Left ventricle myocardium superior (tissue), 1 donor: ENCODE measurements at regions of chr7 and their contacts with region 1.

Region 1: DNA sequence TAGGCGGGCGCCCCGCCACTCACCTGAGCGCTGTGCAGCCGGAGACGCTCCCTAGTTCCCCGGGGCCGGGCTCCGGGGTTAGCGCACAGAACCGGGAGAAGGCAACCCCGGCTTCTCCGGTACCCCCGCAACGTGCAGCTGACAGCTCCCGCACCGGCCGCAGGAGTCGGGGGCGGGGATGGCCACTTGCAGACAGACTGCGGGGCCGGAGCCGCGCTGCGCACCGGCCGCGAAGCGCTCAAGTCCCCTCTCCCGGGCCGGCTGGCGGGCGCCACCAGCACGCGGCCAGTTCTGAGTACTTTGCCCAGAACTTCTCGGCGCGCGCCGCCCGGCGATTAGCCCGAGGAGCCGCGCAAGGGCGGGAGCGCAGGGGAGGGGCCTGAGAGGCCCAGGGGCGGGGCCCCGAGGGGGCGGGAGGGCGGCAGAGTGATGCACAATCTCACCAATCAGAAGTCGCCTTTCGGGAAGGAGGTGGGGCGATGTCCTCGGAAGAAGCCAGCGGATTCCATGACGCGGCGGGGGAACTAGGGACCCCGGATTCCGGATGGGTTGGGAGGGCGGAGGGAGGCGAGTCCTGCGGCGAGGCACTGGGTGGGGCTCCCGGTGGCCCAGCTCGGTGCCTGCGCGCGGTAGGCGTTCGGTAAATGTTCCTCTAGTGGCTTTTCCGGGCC is at the start of gene OSBPL3:
- DNase-seq: peak; percentile 96
- ATAC-seq: peak; percentile 96
- total RNA-seq, gene OSBPL3: 9.0 TPM

Region 2: DNA sequence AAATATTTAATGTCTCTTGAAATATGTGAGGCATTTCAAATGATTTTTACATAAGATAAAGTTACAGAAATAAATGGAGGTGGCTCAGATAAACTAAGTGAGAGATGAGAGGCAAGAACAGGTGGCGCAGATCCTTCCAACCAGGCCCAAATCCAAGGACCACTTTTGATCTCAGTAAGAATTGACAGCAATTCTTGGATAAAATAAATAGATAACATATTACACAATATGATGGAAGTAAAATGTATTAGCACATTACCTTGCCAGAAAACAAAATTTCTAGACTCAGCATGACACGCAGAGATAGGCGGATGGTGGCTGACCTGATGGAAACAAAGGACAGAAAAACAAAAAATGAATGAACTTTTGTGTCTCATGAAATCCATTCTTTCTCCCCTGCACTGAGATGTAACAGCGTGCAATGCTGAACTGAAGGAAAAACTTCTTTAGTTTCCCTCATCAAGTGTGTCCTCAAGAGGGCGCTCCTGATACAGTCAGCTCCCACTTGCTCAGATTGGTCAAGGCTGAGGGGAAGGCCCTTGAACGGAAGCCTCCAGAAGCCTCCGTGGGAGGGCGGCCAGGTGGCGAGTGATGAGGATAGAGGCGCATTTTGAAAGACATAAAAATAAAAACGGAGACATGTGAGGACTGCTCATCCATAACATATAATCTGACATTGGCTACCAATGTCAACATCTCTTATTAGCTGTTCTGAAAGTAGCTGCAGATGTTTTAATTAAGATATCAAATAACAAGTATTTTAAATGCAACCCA is 159.9 kb before region 1 on chr7:
- intact Hi-C with region 1: loop called (anchors 10 kb)
- DNase-seq: peak; percentile 79
- ATAC-seq: peak; percentile 94

Region 3: GRCh38 chr7:24922099-24922773 is 57.8 kb before region 1 on chr7:
- intact Hi-C with region 1: loop called (anchors 5 kb)
- DNase-seq: no peak
- ATAC-seq: peak; percentile 51

Region 4: GRCh38 chr7:25835197-25835596 is 855.2 kb after region 1 on chr7:
- intact Hi-C with region 1: no loop called
- DNase-seq: no peak
- ATAC-seq: no peak